ENCODE measurements at regions of chr2 and their contacts with region 1.

Region 1: GRCh38 chr2:156435715-156436496 is at the start of gene GPD2:
- DNase-seq: no peak
- ATAC-seq: peak; percentile 77
- H3K4me3 ChIP-seq: peak within 1 kb of the TSS; percentile 68
- H3K27ac ChIP-seq: peak within 1 kb of the TSS; percentile 81
- H3K4me1 ChIP-seq: peaks cover 23% of the 10 kb centered on the region
- H3K27me3 ChIP-seq: no peaks in the 10 kb centered on the region
- CTCF ChIP-seq: no peak
- EP300 ChIP-seq: 0 out of 4 replicates have a peak, but pooled peaks of 1 of the 2 experiments have one; percentile 4
- POLR2A ChIP-seq: peak; percentile 90
- RAD21 ChIP-seq: 0 out of 2 replicates have a peak, but pooled peaks have one; percentile 10
- polyA plus RNA-seq, gene GPD2: 10.0 to 10.5 TPM

Region 2: GRCh38 chr2:156341452-156342253 is 94.3 kb before region 1 on chr2:
- CTCF ChIA-PET with region 1: interaction called, 16 read pairs
- POLR2A ChIA-PET with region 1: interaction called, 20 read pairs
- RAD21 ChIA-PET with region 1: interaction called, 30 read pairs
- SMC1A ChIA-PET with region 1: interaction called, 28 read pairs
- in situ Hi-C with region 1: no loop called
- intact Hi-C with region 1: loop called (anchors 1 kb)
- DNase-seq: peak; percentile 89
- ATAC-seq: peak; percentile 86
- H3K4me3 ChIP-seq: peak overlapping the region; percentile 93
- H3K27ac ChIP-seq: peak overlapping the region; percentile 100
- H3K4me1 ChIP-seq: peaks cover 15% of the 10 kb centered on the region
- H3K27me3 ChIP-seq: no peaks in the 10 kb centered on the region
- CTCF ChIP-seq: no peak
- EP300 ChIP-seq: no peak; a peak in 1 of 4 replicates
- POLR2A ChIP-seq: peak; percentile 90
- RAD21 ChIP-seq: no peak; the same call in 1 of the 2 replicates

Region 3: GRCh38 chr2:156400706-156401678 is 34.9 kb before region 1 on chr2:
- CTCF ChIA-PET with region 1: interaction called, 11 read pairs
- POLR2A ChIA-PET with region 1: interaction called, 5 read pairs
- RAD21 ChIA-PET with region 1: interaction called, 19 read pairs
- SMC1A ChIA-PET with region 1: interaction called, 58 read pairs
- in situ Hi-C with region 1: no loop called
- intact Hi-C with region 1: no loop called
- DNase-seq: peak; percentile 82
- ATAC-seq: peak; percentile 78
- H3K4me3 ChIP-seq: peak overlapping the region; percentile 70
- H3K27ac ChIP-seq: peak overlapping the region; percentile 86
- H3K4me1 ChIP-seq: peaks cover 17% of the 10 kb centered on the region
- H3K27me3 ChIP-seq: no peaks in the 10 kb centered on the region
- CTCF ChIP-seq: no peak
- EP300 ChIP-seq: peak in 1 of 2 experiments; percentile 83; a peak in 1 of 4 replicates
- POLR2A ChIP-seq: no peak
- RAD21 ChIP-seq: no peak

Region 4: GRCh38 chr2:156486147-156486546 is 50.2 kb after region 1 on chr2:
- CTCF ChIA-PET with region 1: no interaction called
- POLR2A ChIA-PET with region 1: interaction called, 9 read pairs
- RAD21 ChIA-PET with region 1: interaction called, 7 read pairs
- SMC1A ChIA-PET with region 1: interaction called, 16 read pairs
- in situ Hi-C with region 1: no loop called
- intact Hi-C with region 1: no loop called
- DNase-seq: no peak
- ATAC-seq: no peak
- H3K4me3 ChIP-seq: no peak overlapping the region
- H3K27ac ChIP-seq: no peak overlapping the region
- H3K4me1 ChIP-seq: peaks cover 13% of the 10 kb centered on the region
- H3K27me3 ChIP-seq: no peaks in the 10 kb centered on the region
- CTCF ChIP-seq: no peak
- EP300 ChIP-seq: no peak
- POLR2A ChIP-seq: no peak
- RAD21 ChIP-seq: no peak

Region 5: GRCh38 chr2:156526950-156527636 is 91.2 kb after region 1 on chr2:
- CTCF ChIA-PET with region 1: interaction called, 5 read pairs
- POLR2A ChIA-PET with region 1: interaction called, 3 read pairs
- RAD21 ChIA-PET with region 1: interaction called, 6 read pairs
- SMC1A ChIA-PET with region 1: interaction called, 12 read pairs
- in situ Hi-C with region 1: no loop called
- intact Hi-C with region 1: no loop called
- DNase-seq: no peak
- ATAC-seq: peak; percentile 94
- H3K4me3 ChIP-seq: no peak overlapping the region
- H3K27ac ChIP-seq: peak overlapping the region; percentile 81
- H3K4me1 ChIP-seq: peaks cover 16% of the 10 kb centered on the region
- H3K27me3 ChIP-seq: no peaks in the 10 kb centered on the region
- CTCF ChIP-seq: no peak
- EP300 ChIP-seq: peak; percentile 96 to 99
- POLR2A ChIP-seq: no peak
- RAD21 ChIP-seq: no peak

Region 6: DNA sequence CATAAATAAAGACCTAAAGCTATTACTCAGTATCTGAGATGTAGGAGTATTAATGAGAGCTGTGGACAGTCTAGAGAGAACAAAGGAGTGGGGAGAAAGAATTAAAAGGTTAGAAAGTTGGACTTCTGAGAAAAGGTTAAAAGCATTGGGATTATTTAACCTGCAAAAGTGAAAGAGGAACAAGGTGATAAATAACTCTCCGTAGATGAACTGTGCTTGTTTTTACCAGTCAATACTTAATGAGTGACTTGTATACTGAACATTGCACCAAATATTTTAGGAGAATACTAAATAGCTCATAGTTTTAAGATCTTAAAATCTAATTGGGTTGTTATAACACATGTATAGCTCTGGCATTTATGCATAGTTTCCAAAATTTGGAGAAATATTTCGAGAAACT is 137.8 kb after region 1 on chr2:
- CTCF ChIA-PET with region 1: interaction called, 3 read pairs
- POLR2A ChIA-PET with region 1: no interaction called
- RAD21 ChIA-PET with region 1: interaction called, 3 read pairs
- SMC1A ChIA-PET with region 1: interaction called, 12 read pairs
- in situ Hi-C with region 1: no loop called
- intact Hi-C with region 1: no loop called
- DNase-seq: no peak
- ATAC-seq: peak; percentile 85
- H3K4me3 ChIP-seq: no peak overlapping the region
- H3K27ac ChIP-seq: peak overlapping the region; percentile 18; the same call in 1 of the 2 replicates
- H3K4me1 ChIP-seq: peaks cover 10% of the 10 kb centered on the region; the same call in 1 of the 2 replicates
- H3K27me3 ChIP-seq: no peaks in the 10 kb centered on the region
- CTCF ChIP-seq: no peak
- EP300 ChIP-seq: no peak
- POLR2A ChIP-seq: no peak
- RAD21 ChIP-seq: no peak